CD14-positive monocyte (primary cell): ENCODE measurements at regions of chr11 and their contacts with region 1.

Region 1: DNA sequence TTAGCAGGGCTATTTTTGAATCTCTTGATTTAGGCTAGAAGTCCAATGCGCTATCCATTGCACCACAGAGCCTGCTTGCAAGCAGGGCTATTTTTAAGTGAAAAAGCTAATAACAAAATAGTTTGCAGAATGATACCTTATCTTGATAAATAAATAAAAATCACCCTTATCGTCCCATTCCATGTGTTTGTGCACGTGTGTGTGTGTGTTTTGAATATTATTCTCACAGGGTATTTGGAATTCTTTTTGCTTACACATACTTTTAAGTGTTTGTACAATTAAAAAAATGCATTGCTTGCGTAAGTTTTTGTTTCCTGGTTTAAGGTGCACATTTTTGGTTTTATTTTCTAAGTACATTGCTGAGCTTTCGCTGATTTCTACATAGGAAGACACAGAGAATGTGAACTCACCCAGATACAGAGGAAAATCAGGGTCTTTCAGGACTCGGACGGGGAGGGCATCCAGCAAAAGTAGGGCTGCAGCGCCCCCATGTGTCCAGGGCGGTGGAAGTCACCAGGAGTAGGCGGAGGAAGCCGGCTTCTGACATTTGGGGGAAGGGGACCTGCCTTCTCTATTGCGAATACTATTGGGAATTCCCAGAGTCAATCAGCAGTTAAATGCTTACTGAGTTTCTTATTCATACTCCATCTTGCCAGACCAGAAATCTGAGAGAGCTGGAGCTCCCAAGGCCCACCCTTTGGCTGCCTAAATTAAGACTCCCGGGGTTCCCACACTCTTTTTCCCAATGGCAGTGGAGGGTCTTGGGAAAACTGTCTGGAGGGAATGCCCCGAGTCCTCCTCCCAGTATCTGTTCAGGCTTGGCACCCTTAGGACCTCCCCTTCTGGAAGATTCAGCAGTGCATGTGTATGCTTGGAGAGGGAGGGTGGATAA is 27.2 kb downstream of the SLC1A2 start:
- DNase-seq: peak; percentile 60 to 88 (median 73)
- H3K4me3 ChIP-seq: peak overlapping the region; percentile 25 to 64 (median 28)
- H3K4me3 Mint-ChIP-seq: peak overlapping the region; percentile 73 to 87
- H3K27ac ChIP-seq: peak overlapping the region in 1 of 2 donors; percentile 39
- H3K27ac Mint-ChIP-seq: peak overlapping the region in 5 of 7 donors; percentile 54 to 91 (median 82)
- H3K4me1 ChIP-seq: peaks cover 15% of the 10 kb centered on the region in 2 donors
- H3K4me1 Mint-ChIP-seq: peaks cover 19% of the 10 kb centered on the region
- H3K27me3 ChIP-seq: no peaks in the 10 kb centered on the region
- H3K27me3 Mint-ChIP-seq: peaks cover 0 to 4% (median 2%) of the 10 kb centered on the region in 3 donors
- CTCF ChIP-seq: peak; percentile 98

Region 2: DNA sequence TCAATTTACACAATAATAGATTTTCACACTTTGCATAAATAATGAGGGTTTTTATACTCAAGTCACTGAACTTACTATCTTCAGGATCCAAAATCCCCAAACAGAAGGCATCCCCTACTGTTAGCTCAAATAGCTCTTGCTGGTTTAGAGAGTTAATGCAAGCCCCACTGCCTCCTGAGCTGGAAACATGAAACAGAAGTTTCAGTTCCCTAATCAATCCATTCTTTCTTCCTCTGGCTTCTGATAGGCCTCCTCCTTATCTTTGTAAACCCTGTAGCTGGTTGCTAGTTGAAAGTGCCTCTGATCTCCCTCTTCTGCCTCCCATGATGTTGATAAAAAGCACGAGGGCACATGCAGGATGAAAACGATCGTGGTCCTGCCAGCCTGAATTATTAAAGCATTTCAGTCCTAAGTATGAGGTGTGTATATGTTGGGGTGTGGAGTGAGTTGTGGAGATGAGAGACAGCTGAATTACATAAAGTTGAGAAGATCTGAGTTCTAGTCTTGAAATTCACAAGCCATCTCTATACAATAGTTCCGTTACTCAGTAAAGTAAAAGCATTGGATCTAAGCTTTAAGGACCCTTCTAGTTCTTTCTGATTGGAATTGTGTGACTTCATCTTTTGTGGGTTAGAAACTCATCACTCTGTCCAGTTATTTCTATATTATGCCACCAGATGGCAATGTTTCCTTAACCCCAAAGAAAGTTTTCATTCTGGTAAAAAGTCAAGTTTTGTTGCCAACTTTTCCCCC is 806.3 kb before region 1 on chr11:
- intact Hi-C with region 1: loop called in 1 of 2 experiments (anchors 2 kb)
- DNase-seq: peak; percentile 26 to 68 (median 55)
- H3K4me3 ChIP-seq: no peak overlapping the region
- H3K4me3 Mint-ChIP-seq: peak overlapping the region in 1 of 2 donors; percentile 43
- H3K27ac ChIP-seq: peak overlapping the region in 1 of 2 donors; percentile 20
- H3K27ac Mint-ChIP-seq: peak overlapping the region; percentile 0 to 87 (median 73)
- H3K4me1 ChIP-seq: peaks cover 21 to 23% of the 10 kb centered on the region in 2 donors
- H3K4me1 Mint-ChIP-seq: peaks cover 31% of the 10 kb centered on the region
- H3K27me3 ChIP-seq: no peaks in the 10 kb centered on the region
- H3K27me3 Mint-ChIP-seq: peaks cover 0 to 5% (median 3%) of the 10 kb centered on the region in 3 donors
- CTCF ChIP-seq: peak; percentile 83

Region 3: DNA sequence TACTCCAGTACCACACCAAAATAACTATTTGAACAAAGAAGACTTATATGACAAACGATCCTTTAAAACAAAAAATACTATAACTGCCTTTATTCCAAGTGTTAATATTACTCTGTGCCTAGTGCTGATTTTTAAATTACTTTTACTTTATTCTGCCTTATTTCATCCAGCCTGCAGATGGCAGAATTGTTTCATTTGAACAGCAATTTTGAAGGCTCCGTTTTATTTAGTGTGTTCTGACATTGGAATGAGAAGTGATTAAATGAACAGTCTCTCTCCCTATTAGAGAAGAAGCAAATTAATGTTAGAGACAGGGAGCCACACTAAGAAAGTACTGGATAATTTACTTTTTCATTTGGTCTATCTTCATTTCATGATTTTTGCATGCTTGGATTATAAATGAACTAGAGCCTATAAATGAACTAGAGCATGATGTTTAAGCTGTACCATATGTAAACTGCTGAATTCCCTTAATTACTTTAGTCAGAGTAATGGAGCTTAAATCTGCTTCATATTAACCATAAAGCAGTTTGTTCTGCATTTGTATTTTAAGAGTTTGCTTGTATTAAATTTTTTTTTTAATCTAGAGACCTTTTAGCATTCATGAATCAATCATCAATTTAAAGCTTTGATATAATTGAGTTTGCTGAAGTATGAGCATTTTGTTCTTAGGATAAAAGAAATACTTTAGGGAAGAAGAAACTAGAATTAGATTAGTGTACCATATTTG is 465.9 kb before region 1 on chr11:
- intact Hi-C with region 1: loop called (anchors 2 kb)
- DNase-seq: peak; percentile 18 to 46 (median 45)
- H3K4me3 ChIP-seq: no peak overlapping the region
- H3K4me3 Mint-ChIP-seq: no peak overlapping the region
- H3K27ac ChIP-seq: no peak overlapping the region
- H3K27ac Mint-ChIP-seq: no peak overlapping the region
- H3K4me1 ChIP-seq: peaks cover 0 to 3% of the 10 kb centered on the region in 2 donors
- H3K4me1 Mint-ChIP-seq: peaks cover 13% of the 10 kb centered on the region
- H3K27me3 ChIP-seq: no peaks in the 10 kb centered on the region
- H3K27me3 Mint-ChIP-seq: no peaks in the 10 kb centered on the region
- CTCF ChIP-seq: peak; percentile 85

Region 4: DNA sequence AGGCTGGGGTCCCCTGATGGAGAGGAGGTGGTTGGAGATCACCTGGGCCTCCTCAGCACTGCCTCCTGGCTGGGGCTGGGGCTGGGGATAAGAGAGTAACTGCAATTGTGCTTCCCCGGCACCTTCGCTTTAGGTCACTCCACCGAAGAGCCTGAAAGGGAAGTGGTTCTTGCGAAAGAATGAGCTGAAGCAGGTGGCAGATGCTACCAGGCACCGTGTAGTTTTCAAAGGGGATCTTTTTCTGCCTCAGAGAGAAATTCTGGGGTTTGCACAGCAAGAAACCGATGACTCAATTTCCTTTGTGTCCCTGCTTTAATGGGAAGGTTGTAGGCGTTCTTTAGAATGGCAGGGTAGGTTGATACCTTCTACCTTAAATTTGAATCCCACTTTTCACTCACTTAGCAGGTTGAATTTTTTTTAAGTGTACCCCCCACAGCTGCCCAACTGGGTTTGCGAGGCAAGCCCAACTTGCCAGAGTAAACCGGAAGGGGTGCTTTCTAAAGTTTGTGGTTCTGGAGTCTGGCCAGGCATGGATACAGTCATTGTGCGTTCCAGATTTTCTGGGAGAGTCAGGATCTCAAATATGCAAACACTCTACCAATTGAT is 247.9 kb before region 1 on chr11:
- intact Hi-C with region 1: loop called in 1 of 2 experiments (anchors 10 kb)
- DNase-seq: peak; percentile 75 to 95 (median 87)
- H3K4me3 ChIP-seq: peak overlapping the region; percentile 15 to 93 (median 15)
- H3K4me3 Mint-ChIP-seq: peak overlapping the region; percentile 64 to 73
- H3K27ac ChIP-seq: peak overlapping the region; percentile 67 to 98
- H3K27ac Mint-ChIP-seq: peak overlapping the region; percentile 84 to 98 (median 87)
- H3K4me1 ChIP-seq: peaks cover 53 to 78% of the 10 kb centered on the region in 2 donors
- H3K4me1 Mint-ChIP-seq: peaks cover 77% of the 10 kb centered on the region
- H3K27me3 ChIP-seq: no peaks in the 10 kb centered on the region
- H3K27me3 Mint-ChIP-seq: no peaks in the 10 kb centered on the region
- CTCF ChIP-seq: no peak

Region 5: DNA sequence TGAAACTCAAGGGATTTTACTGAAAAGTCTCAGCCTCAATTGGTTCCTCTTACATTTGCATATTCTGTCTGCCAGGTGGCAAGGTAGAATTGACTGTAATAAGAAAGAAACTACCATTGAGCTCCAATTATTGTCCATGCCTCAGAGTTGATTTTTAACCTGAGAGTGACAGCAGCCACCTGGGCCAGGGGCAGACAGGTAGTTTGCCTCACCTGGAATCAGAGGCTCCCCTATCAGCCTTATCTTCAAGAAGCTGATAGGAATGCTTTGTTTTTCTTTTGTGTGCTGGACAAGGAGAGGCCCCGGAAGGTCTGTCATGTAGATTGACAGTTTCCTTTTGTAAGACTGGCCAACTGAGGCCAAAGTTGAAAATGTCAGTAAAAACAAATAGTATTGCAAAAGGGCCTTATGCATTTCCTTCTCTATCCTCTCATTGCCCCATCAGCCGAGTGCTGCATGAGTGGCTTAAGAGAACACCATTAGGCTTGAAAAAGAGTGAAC is 219.1 kb before region 1 on chr11:
- intact Hi-C with region 1: loop called in 1 of 2 experiments (anchors 10 kb)
- DNase-seq: peak; percentile 73 to 86 (median 81)
- H3K4me3 ChIP-seq: peak overlapping the region in 1 of 3 experiments; percentile 57
- H3K4me3 Mint-ChIP-seq: peak overlapping the region; percentile 31 to 71
- H3K27ac ChIP-seq: peak overlapping the region; percentile 71 to 86
- H3K27ac Mint-ChIP-seq: peak overlapping the region; percentile 87 to 96 (median 95)
- H3K4me1 ChIP-seq: peaks cover 70 to 85% of the 10 kb centered on the region in 2 donors
- H3K4me1 Mint-ChIP-seq: peaks cover 77% of the 10 kb centered on the region
- H3K27me3 ChIP-seq: no peaks in the 10 kb centered on the region
- H3K27me3 Mint-ChIP-seq: no peaks in the 10 kb centered on the region
- CTCF ChIP-seq: no peak

Region 6: DNA sequence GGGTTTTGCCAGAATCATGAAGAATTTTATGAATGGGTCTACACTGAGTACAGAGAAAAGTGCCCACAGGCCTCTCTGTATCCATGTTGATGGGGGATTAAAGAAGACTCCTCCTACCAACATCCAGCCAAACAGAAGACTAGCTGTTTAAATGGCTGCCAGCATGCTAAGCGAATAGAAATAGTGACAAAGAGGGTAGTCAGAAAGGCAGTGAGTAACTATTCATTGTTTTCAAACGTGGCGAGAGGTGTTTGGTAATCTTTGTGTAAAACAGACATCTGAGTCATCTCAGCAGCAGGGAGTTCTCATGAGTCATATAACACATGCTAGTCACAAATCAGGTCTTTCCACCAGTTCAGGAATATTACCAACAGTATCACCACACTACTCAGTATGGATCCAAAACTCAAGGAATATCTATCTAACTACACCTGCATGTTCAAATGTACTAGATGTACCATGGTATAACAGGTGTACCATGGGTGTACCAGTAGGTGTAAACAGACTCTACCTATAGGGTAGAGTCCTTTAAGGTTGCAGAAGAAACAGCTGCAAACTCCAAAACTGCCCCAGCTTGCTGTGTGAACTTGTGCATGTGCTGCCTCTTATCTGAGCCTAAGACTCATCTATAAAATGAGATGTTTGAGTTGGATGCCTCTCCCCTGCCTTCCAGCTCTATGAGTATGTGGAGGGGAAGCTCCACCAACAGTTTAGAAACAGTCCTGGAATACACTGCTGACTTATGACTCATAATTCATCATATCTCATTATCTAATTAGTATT is 54.8 kb before region 1 on chr11:
- intact Hi-C with region 1: no loop called
- DNase-seq: peak; percentile 86 to 92 (median 92)
- H3K4me3 ChIP-seq: no peak overlapping the region
- H3K4me3 Mint-ChIP-seq: no peak overlapping the region
- H3K27ac ChIP-seq: peak overlapping the region in 1 of 2 donors; percentile 83
- H3K27ac Mint-ChIP-seq: peak overlapping the region; percentile 73 to 95 (median 89)
- H3K4me1 ChIP-seq: peaks cover 7 to 24% of the 10 kb centered on the region in 2 donors
- H3K4me1 Mint-ChIP-seq: peaks cover 23% of the 10 kb centered on the region
- H3K27me3 ChIP-seq: no peaks in the 10 kb centered on the region
- H3K27me3 Mint-ChIP-seq: peaks cover 0 to 3% (median 2%) of the 10 kb centered on the region in 3 donors
- CTCF ChIP-seq: no peak

Region 7: GRCh38 chr11:35347921-35348331 is 44.2 kb before region 1 on chr11:
- intact Hi-C with region 1: loop called in 1 of 2 experiments (anchors 5 kb)
- DNase-seq: peak in 1 of 3 donors; percentile 18
- H3K4me3 ChIP-seq: no peak overlapping the region
- H3K4me3 Mint-ChIP-seq: no peak overlapping the region
- H3K27ac ChIP-seq: peak overlapping the region; percentile 9 to 18
- H3K27ac Mint-ChIP-seq: peak overlapping the region in 4 of 7 donors; percentile 3 to 25 (median 16)
- H3K4me1 ChIP-seq: peaks cover 47 to 68% of the 10 kb centered on the region in 2 donors
- H3K4me1 Mint-ChIP-seq: peaks cover 62% of the 10 kb centered on the region
- H3K27me3 ChIP-seq: no peaks in the 10 kb centered on the region
- H3K27me3 Mint-ChIP-seq: peaks cover 0 to 4% (median 1%) of the 10 kb centered on the region in 3 donors
- CTCF ChIP-seq: no peak

Region 8: DNA sequence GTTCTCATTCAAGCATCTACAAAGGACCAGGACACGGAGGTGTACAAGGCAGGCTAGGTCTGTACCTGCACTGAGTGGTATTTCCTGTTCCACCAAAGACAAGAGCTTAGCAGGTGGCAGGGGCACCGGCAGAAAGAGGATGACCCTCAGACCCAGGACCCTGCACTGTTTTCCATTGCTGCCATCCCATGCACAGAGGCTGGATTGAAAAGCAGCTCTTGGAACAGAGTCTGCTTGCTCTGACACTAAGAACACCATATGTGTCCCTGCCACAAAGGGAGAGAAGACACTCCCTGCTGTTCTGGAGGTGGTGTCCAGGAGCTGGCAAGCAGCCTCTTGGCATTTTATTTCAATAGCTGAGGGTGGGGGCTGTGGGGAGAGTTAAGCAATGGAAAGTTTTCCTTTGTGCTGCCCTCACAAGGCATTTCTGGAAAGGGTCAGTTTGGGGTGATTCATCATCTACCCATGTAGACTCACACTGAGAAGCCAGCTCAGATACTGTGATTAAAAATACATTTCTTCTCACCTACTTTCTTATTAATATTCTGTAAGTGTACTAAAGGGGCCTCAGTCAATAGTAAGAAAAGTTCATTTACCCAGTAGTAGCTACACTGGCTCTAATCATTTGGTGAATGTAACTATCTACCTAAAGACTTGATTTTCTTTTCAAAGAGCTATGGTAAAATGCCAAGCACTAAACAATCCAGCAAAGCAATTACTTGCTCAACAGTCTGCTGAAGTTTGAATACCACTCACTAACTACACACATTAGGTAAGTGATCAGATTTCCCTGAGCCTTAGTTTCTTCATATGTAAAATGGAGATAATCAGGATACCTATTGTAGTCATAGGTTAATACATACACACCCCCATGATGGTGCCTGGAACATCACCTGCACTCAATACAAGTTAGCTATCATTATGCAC is 28.1 kb before region 1 on chr11:
- intact Hi-C with region 1: no loop called
- DNase-seq: peak in 1 of 3 donors; percentile 28
- H3K4me3 ChIP-seq: no peak overlapping the region
- H3K4me3 Mint-ChIP-seq: no peak overlapping the region
- H3K27ac ChIP-seq: no peak overlapping the region
- H3K27ac Mint-ChIP-seq: peak overlapping the region in 1 of 7 donors; percentile 68
- H3K4me1 ChIP-seq: no peaks in the 10 kb centered on the region
- H3K4me1 Mint-ChIP-seq: peaks cover 4% of the 10 kb centered on the region
- H3K27me3 ChIP-seq: no peaks in the 10 kb centered on the region
- H3K27me3 Mint-ChIP-seq: peaks cover 0 to 3% (median 1%) of the 10 kb centered on the region in 3 donors
- CTCF ChIP-seq: no peak